ENCODE measurements at regions of chr7 and their contacts with region 1.

Region 1: DNA sequence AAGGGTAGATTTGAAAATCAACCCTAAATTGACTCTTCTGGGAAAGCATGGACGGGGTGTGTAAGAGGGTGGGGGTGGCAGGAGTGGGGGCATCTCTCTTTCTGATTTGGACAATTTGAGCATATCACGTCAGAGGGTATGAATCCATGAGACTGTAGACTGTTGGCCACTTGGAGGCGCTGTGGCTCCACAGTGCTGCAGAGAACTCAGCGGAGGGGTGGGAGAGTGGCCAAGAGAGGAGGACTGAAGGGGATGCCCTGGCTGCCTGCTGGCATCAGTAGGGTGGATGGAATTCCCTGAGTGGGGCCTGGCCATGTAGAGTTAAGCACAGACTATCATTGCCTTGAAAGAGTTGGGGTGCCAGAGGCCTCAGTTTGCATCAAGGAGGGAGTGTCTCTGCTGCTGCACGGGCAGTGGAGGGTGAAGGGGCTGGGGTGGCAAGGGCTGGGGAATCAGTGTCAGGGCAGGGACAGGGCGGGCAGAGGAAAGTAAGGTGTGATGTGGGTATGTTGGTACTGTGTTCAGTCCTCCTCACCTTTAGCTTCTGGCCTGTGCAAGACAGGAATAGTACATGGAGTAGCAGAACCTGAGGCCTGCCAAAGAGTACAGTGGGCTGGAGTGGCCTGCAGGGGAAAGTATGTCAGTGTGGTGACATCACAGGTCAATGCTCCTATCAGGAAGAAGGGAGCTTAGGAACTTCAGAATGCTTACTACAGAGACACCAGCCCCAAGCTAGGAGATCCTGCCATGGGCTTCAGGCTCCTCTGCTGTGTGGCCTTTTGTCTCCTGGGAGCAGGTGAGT is 133.5 kb upstream of the PRSS58 start:
- DNase-seq: peak; percentile 46

Region 2: GRCh38 chr7:142587578-142588191 is 196.3 kb after region 1 on chr7:
- CTCF ChIA-PET with region 1: no interaction called
- POLR2A ChIA-PET with region 1: no interaction called
- DNase-seq: peak; percentile 74

Region 3: DNA sequence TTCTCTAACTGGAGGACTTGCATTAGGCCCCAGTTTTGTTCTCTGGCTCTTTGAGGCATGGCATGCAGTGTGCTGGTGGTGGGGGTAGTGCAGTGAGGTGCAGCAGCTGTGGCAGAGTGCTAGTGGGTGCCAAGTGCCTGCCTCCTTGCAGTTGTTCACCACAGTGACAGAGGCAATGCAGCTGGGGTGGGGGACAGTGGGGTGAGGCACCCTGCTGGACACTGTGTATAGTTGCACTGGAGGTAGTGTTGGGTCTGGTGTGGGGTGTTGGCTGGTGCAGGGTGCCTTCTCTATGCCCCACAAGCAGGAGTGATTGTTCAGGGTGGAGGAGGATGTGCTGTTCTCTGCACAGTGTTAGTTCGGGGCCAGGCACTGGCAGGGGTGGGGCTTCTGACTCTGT is 592.4 kb after region 1 on chr7:
- CTCF ChIA-PET with region 1: interaction called, 11 read pairs
- POLR2A ChIA-PET with region 1: no interaction called
- DNase-seq: no peak

Measured in HEK293T (cell line).